Sciatic nerve (tissue), 2 donors: ENCODE measurements at regions of chr16 and their contacts with region 1.

Region 1: DNA sequence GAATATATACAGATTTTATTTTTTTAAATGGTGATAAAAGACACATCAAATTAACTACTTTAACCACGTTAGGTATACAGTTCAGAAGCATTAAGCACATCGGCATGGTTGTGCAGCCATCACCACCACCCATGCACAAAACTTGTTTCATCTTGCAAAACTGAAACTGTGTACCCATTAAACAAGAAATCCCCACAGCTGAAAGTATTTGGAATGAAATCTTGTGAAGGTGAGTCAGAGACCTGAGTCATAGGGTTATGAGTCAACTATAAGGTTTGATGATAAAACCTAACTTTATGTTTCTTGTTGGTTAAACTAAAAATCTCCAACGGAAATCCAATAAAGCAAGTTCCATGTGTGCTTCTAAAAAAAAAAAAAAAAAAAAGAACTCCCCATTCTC is 561.6 kb upstream of the PSMD7 start:
- DNase-seq: no peak
- ATAC-seq: no peak

Region 2: GRCh38 chr16:72332926-72333325 is 1402.1 kb before region 1 on chr16:
- intact Hi-C with region 1: loop called (anchors 5 kb)
- DNase-seq: no peak
- ATAC-seq: no peak